ENCODE measurements at regions of chr17 and their contacts with region 1.

Region 1: DNA sequence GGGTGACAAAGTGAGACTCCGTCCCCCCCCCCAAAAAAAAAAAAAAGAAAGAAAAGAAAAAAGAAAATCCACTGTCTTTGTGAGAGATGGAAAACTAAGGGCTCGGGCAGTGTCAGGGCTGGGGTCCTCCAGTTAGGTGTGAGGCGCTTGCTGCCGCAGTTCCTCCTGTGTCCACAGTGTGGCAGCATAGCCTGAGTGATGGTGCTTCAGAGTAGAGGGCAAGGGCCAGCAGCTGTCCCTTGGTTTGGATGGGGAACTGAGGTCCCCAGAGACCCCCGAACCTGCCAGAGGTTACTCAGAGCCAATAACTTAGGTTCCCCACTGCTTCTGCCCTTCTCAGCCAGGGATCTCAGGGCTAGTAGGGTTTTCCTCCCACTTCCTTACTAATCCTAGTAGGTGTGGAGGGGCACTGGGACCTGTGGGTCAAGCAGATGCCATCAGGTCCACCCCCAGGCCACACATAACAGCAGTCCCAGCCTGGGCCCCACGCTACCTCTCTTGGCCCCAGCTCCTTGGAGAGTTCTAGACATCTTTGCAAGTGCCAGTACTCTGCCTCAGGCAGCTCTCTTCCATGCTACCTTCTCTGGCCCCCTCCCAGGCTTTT is 7.9 kb upstream of the LLGL1 start:
- DNase-seq: peak; percentile 90
- H3K4me3 ChIP-seq: no peak overlapping the region
- H3K27ac ChIP-seq: no peak overlapping the region
- H3K4me1 ChIP-seq: peaks cover 0 to 20% (median 9%) of the 10 kb centered on the region in 6 donors
- H3K27me3 ChIP-seq: no peaks in the 10 kb centered on the region
- CTCF ChIP-seq: peak; percentile 85 to 96 (median 92)
- POLR2A ChIP-seq: no peak

Region 2: DNA sequence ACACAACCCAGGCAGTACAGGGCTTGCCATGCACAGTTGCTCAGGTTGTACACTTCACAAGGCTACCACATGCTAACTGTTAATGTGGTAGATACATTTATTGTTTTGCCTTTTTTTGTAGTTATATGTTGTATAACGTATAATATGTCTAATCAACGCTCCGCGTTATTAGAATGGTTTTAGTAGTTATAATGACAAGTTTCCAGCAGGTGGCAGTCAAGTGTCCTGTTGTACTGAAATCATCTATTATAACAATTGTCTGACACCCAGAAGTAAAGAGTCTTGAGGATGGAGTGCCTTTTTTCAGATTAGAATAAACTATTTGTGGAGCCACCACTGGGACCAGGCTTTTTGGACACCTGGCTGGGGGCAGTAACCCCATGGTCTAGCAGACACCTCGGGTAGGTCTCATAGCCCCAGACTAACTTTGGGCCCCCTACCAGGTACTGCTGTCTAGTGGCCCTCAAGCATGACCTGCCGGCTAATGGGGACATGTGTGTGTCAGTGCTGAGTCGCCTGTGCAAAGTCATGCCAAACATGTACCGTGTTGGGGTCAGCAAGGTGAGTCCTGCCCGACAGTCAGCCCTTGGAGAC is 76.2 kb before region 1 on chr17:
- intact Hi-C with region 1: loop called (anchors 5 kb)
- DNase-seq: no peak
- H3K4me3 ChIP-seq: no peak overlapping the region
- H3K27ac ChIP-seq: no peak overlapping the region
- H3K4me1 ChIP-seq: peaks cover 0 to 11% (median 3%) of the 10 kb centered on the region in 6 donors
- H3K27me3 ChIP-seq: peaks cover 0 to 45% (median 0%) of the 10 kb centered on the region in 7 donors
- CTCF ChIP-seq: peak; percentile 17 to 75 (median 55)
- POLR2A ChIP-seq: no peak

Measured in spleen (tissue), 13 donors.